ENCODE measurements at regions of chr18 and their contacts with region 1.

Region 1: DNA sequence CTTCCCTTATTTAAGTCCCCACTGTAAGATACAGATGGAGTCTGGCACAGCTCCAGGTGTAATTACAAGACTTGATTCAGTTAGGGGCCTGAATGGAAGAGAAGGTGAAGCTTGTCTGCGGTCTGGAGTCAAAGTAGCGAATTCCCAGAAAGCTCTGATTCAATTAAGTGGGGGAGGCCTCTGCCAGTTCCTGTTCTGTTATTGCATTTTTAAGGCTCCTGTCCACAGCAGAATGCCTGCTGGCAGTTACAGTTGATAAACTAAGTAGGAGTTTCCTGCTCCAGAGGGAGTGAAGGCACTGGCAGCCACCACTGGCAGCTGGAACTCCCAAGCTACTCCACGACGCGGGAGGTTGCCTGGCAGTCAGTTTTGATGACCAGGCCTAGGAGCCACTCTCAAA is 181.1 kb downstream of the SOCS6 start:
- DNase-seq: no peak
- H3K4me3 ChIP-seq: no peak overlapping the region
- H3K27ac ChIP-seq: no peak overlapping the region
- H3K4me1 ChIP-seq: no peaks in the 10 kb centered on the region
- H3K27me3 ChIP-seq: no peaks in the 10 kb centered on the region
- CTCF ChIP-seq: no peak
- EP300 ChIP-seq: no peak
- POLR2A ChIP-seq: no peak
- RAD21 ChIP-seq: no peak

Region 2: DNA sequence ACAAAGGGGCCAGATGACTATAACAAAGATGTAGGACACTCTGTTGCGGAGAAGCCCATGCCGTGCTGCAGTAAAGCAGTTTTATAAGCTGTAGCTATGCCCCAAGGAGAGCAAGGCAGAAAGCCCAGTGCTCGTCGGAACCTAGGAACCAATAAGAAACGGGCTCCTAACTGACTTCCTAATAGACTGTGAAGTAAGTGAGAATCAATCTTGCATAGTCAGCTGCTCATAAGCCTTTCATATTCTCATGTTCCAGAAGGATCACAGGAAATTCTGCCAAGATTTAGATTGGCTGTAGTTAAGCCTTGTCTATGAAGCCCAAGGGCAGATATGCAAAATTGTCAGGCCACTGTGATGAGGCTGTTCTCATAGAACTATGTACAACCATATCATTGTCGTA is 362.8 kb before region 1 on chr18:
- CTCF ChIA-PET with region 1: no interaction called
- POLR2A ChIA-PET with region 1: no interaction called
- DNase-seq: no peak
- H3K4me3 ChIP-seq: no peak overlapping the region
- H3K27ac ChIP-seq: no peak overlapping the region
- H3K4me1 ChIP-seq: no peaks in the 10 kb centered on the region
- H3K27me3 ChIP-seq: no peaks in the 10 kb centered on the region
- CTCF ChIP-seq: no peak
- EP300 ChIP-seq: no peak
- POLR2A ChIP-seq: no peak
- RAD21 ChIP-seq: no peak

Region 3: DNA sequence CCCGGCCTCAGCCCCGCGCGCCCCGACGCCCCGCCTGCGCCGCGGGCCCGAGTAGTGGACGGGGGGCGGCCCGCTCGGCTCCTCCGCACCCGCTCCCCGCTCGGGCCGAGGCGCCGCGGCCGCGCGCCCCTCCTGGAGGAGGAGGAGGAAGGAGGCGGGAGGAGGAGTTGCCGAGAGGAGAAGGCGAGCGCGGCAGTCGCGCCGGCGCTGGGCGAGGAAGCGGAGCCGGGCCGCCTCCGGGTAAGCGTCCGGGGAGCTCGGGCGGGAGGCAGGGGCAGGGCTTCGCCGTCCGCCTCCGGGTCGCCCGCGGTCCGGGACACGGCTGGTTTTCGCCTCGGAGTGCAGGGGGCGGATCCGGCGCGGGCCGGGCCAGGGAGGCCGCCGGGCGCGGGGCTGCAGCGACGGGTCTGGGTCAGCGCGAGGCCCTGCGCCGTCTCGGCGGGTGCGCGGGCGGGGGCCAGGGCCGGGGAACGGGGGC is 181.0 kb before region 1 on chr18 and contains the start of gene SOCS6:
- CTCF ChIA-PET with region 1: no interaction called
- POLR2A ChIA-PET with region 1: no interaction called
- DNase-seq: peak in 1 of 2 experiments; percentile 76
- H3K4me3 ChIP-seq: peak within 1 kb of the TSS; percentile 75 to 91 (median 84)
- H3K27ac ChIP-seq: peak within 1 kb of the TSS; percentile 79; the same call in 1 of the 2 replicates
- H3K4me1 ChIP-seq: peaks cover 0 to 7% (median 4%) of the 10 kb centered on the region in 4 experiments; a peak in 5 of 7 replicates
- H3K27me3 ChIP-seq: no peaks in the 10 kb centered on the region
- CTCF ChIP-seq: no peak
- EP300 ChIP-seq: no peak
- POLR2A ChIP-seq: peak; percentile 59 to 88
- RAD21 ChIP-seq: no peak
- total RNA-seq, gene SOCS6: 20.7 and 22.9 TPM in 2 replicates

Region 4: DNA sequence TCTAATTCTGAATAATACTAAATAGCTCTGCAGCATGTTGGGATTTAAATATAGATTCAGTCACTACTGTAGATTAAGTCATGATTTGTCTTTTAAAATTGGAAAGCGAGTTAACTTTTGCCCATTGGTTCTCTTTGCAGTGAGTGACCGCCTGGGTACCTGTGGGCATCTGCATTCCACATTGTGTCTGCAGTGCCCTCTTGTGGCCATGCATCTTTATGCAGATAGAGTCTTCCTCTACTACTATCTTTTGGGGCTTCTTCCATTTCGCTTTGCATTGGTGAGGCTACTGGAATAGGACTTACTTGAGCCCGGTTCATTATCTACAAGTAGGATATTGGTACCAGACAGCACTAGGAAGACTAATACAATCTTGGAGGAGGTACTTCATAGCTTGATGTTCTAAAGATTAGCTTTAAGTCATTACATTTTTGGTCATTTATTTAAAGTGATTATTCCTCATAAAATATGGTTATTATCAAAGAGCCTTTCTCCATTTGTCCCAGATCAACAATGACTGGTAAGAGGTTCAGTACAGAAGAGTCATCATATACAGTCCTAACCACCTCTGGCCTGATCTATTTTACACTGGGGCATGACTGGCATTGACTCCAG is 21.9 kb after region 1 on chr18:
- CTCF ChIA-PET with region 1: interaction called, 27 read pairs
- POLR2A ChIA-PET with region 1: no interaction called
- DNase-seq: peak in 1 of 2 experiments; percentile 83
- H3K4me3 ChIP-seq: no peak overlapping the region
- H3K27ac ChIP-seq: no peak overlapping the region
- H3K4me1 ChIP-seq: no peaks in the 10 kb centered on the region
- H3K27me3 ChIP-seq: no peaks in the 10 kb centered on the region
- CTCF ChIP-seq: peak; percentile 67 to 82 (median 79)
- EP300 ChIP-seq: no peak
- POLR2A ChIP-seq: no peak
- RAD21 ChIP-seq: peak; percentile 50 to 64; a peak in 3 of 4 replicates